H1 (cell line): ENCODE measurements at regions of chr18 and their contacts with region 1.

Region 1: GRCh38 chr18:7805880-7806279 is 238.8 kb downstream of the PTPRM start:
- DNase-seq: no peak
- H3K4me3 ChIP-seq: no peak overlapping the region
- H3K27ac ChIP-seq: no peak overlapping the region
- H3K4me1 ChIP-seq: peaks cover 0 to 3% (median 2%) of the 10 kb centered on the region in 4 experiments; a peak in 2 of 7 replicates
- H3K27me3 ChIP-seq: no peaks in the 10 kb centered on the region
- CTCF ChIP-seq: peak in 1 of 3 experiments; percentile 2; a peak in 1 of 4 replicates
- EP300 ChIP-seq: no peak
- POLR2A ChIP-seq: no peak
- RAD21 ChIP-seq: no peak; a peak in 1 of 4 replicates

Region 2: GRCh38 chr18:7740821-7741220 is 65.1 kb before region 1 on chr18:
- CTCF ChIA-PET with region 1: no interaction called
- POLR2A ChIA-PET with region 1: no interaction called
- DNase-seq: no peak
- H3K4me3 ChIP-seq: no peak overlapping the region
- H3K27ac ChIP-seq: no peak overlapping the region
- H3K4me1 ChIP-seq: peaks cover 3 to 12% (median 5%) of the 10 kb centered on the region in 4 experiments
- H3K27me3 ChIP-seq: no peaks in the 10 kb centered on the region
- CTCF ChIP-seq: no peak
- EP300 ChIP-seq: no peak
- POLR2A ChIP-seq: no peak
- RAD21 ChIP-seq: no peak

Region 3: DNA sequence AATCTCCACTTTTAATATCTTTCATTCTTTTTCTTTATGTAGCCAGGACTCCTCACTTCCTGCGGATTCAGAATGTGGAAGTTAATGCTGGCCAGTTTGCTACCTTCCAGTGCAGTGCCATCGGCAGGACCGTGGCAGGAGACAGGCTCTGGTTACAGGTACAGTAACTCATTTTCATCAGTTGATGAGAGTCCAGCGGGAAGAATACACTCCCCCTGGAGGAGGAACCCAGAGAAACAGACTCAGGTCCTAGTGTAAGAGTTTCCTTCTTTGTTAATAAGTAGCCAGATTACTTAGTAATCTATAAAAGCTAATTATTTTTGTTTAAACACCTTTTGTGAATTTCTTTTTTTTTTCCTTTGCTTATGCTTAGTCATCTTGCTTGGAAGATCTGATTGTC is 120.6 kb after region 1 on chr18:
- CTCF ChIA-PET with region 1: interaction called, 11 read pairs
- POLR2A ChIA-PET with region 1: no interaction called
- DNase-seq: no peak
- H3K4me3 ChIP-seq: no peak overlapping the region
- H3K27ac ChIP-seq: no peak overlapping the region
- H3K4me1 ChIP-seq: no peaks in the 10 kb centered on the region
- H3K27me3 ChIP-seq: no peaks in the 10 kb centered on the region
- CTCF ChIP-seq: peak in 2 of 3 experiments; percentile 29 to 55; a peak in 2 of 4 replicates
- EP300 ChIP-seq: no peak
- POLR2A ChIP-seq: no peak
- RAD21 ChIP-seq: peak; percentile 45 to 55

Region 4: GRCh38 chr18:8052237-8052701 is 246.4 kb after region 1 on chr18:
- CTCF ChIA-PET with region 1: no interaction called
- POLR2A ChIA-PET with region 1: no interaction called
- DNase-seq: no peak
- H3K4me3 ChIP-seq: no peak overlapping the region
- H3K27ac ChIP-seq: no peak overlapping the region
- H3K4me1 ChIP-seq: peaks cover 0 to 3% (median 0%) of the 10 kb centered on the region in 4 experiments; a peak in 1 of 7 replicates
- H3K27me3 ChIP-seq: no peaks in the 10 kb centered on the region
- CTCF ChIP-seq: peak in 2 of 3 experiments; percentile 39; a peak in 2 of 4 replicates
- EP300 ChIP-seq: no peak
- POLR2A ChIP-seq: no peak
- RAD21 ChIP-seq: peak; percentile 68 to 72